Naive thymus-derived CD8-positive, alpha-beta T cell (primary cell): ENCODE measurements at regions of chr3 and their contacts with region 1.

Region 1: GRCh38 chr3:194671900-194672808 is at the start of gene LSG1:
- DNase-seq: peak; percentile 73 to 95 (median 86)
- ATAC-seq: peak; percentile 94 to 95
- H3K4me3 Mint-ChIP-seq: peak within 1 kb of the TSS; percentile 96 to 100 (median 98)
- H3K27ac Mint-ChIP-seq: peak within 1 kb of the TSS; percentile 95 to 100 (median 99)
- H3K4me1 Mint-ChIP-seq: peaks cover 18 to 42% (median 34%) of the 10 kb centered on the region in 4 donors
- H3K27me3 Mint-ChIP-seq: peaks cover 0 to 7% (median 0%) of the 10 kb centered on the region in 5 donors
- polyA plus RNA-seq, gene LSG1: 23.0 to 42.8 (median 24.8) TPM

Region 2: GRCh38 chr3:195259475-195260279 is 587.5 kb after region 1 on chr3:
- POLR2A ChIA-PET with region 1: interaction called, 19 read pairs
- DNase-seq: peak; percentile 84 to 95 (median 92)
- ATAC-seq: peak; percentile 80 to 81
- H3K4me3 Mint-ChIP-seq: peak overlapping the region; percentile 56 to 76 (median 69)
- H3K27ac Mint-ChIP-seq: peak overlapping the region; percentile 70 to 95 (median 90)
- H3K4me1 Mint-ChIP-seq: peaks cover 20 to 39% (median 36%) of the 10 kb centered on the region in 4 donors
- H3K27me3 Mint-ChIP-seq: no peaks in the 10 kb centered on the region